Left ventricle myocardium superior (tissue), 1 donor: ENCODE measurements at regions of chr6 and their contacts with region 1.

Region 1: GRCh38 chr6:30914076-30914853 is at the start of gene VARS2:
- DNase-seq: peak; percentile 95
- ATAC-seq: peak; percentile 95
- total RNA-seq, gene VARS2: 18.2 TPM

Region 2: GRCh38 chr6:30568245-30568644 is 346.0 kb before region 1 on chr6:
- intact Hi-C with region 1: loop called (anchors 5 kb)
- DNase-seq: no peak
- ATAC-seq: no peak

Region 3: DNA sequence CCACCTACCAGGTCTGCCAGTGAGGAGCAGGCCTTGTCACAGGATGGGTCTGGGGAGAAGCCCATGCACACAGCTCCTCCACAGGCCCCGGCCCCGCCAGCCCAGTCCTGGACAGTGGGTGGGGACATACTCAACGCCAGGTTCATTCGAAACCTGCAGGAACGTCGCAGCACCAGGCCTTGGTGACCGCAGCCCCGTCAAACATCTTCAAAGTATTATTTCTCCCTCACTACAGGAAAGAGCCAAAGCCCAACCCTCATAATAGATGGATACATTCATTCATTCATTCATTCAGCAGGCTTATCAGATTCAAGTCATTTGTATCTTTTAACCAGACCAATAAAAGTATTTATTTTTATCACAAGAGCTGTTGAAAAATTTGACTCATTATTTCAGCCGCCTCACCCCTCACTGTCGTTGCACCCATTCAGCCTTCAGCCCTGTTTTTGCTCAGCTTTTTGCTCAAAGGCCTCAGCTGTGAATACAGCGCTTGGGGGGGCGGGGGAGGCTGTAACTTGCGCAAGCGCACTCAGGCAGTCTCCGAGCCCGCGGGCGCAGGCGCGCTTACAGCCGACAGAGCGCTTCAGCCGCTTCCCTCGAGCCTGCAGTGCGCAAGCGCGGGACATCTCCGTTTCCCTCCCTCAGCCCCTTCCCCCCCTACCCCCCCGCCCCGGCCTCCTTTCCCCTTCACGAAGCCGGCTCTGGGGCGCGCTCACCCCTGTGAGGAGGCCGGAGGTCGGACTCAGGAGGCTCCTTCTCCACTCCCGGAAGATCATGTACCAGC is 267.6 kb before region 1 on chr6 and contains the start of gene C6orf136:
- intact Hi-C with region 1: no loop called
- DNase-seq: peak; percentile 97
- ATAC-seq: peak; percentile 92
- total RNA-seq, gene C6orf136: 54.9 TPM

Region 4: DNA sequence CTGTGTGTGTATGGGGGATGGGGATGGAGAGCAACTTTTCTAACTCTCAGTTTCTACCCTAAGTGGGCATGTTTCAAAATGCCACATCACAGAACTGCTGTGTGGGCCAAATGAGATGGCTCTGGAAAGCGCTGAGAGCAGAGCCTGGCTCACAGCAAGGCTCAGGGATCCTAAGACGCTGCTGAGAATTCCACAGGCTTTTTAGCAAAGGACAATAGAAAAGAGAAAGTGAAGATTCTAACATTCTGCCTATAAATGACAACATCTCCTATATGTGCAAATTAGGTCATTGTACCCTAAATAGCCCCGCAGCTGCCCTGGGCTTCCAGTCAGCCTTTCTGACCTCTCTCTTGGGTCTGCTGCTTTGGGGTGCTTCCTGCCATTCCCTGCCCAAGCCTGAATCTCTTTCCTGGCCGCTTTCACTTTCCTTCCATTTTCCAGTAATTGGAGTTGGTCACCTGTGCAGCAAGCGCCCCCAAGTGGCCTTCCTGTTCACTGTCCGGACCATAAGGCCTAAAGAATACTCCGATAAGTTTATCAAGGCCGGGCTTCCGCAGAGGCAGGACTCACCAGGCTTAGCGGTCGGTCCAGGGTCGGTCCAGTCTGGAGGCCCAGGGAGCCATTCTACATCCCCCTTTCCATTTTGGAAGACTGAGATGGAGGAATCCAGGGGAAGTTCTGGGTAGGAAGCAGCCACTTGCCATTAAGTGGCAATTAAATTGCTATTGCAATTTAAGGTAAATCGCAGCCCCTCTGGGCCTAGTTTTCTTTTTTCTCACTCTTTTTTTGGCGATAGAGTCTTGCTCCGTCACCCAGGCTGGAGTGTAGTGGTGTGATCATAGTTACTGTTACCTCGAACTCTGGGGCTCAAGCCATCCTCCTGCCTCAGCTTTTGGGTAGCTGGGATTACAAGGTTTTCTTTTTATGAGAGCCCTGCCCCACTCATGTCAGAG is 36.6 kb before region 1 on chr6:
- intact Hi-C with region 1: no loop called
- DNase-seq: peak; percentile 92
- ATAC-seq: peak; percentile 90

Region 5: DNA sequence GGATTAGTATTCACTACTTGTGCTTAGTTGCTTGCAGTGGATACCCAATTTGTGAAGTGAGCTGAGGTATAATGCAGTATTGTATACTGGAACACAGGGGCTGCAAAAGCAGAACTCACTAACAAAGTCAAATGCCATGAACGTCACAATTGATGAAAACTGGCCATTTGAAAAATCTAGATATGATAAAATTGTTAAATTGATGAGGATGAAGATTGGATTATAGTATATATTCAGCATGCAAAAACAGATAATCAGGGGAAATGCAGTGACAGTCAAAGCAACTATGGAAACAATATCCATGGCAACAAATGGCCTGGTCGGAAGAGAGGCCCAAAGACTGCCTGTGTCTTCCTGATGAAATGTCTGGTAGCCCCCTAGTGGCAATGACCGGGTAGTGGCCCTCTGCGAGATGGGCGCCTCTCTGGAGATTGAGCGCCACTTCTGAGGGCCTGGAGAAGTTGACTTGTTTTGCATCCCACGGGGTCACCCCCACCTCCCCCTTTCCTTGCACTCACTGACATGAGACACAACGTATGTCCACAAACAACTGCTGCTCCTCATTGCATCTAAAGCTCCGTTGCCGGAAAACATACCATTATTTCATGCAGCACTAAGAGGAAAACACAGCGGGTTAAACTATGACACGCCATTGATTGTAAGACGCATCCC is 154.5 kb after region 1 on chr6:
- intact Hi-C with region 1: loop called (anchors 2 kb)
- DNase-seq: peak; percentile 82
- ATAC-seq: peak; percentile 90